Sciatic nerve (tissue), 2 donors: ENCODE measurements at regions of chr4 and their contacts with region 1.

Region 1: DNA sequence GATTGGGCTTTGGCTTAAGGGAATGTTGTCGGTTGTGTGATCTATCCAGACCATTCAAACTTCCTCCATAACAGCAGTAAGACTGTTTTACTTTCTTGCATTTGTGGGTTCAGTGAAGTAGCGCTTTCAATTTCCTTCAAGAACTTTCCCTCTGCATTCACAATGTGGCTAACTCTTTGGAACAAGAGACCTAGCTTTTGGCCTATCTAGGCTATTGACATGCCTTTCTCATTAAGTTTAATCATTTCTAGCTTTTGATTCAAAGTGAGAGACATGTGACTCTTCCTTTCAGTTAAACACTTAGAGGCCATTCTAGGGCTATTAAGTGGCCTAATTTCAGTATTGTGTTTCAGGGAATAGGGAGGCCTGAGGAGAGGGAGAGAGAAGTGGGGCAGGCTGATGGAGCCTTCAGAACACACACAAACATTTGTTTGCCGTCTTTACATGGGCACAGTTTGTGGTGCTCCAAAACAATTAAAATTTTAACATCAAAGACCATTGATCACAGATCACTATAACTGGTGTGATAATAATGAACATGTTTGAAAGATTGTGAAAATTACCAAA is 34.1 kb downstream of the ADH5 start:
- DNase-seq: no peak
- ATAC-seq: no peak

Region 2: GRCh38 chr4:98143001-98143899 is 911.3 kb before region 1 on chr4 and contains the start of gene STPG2:
- intact Hi-C with region 1: loop called (anchors 10 kb)
- DNase-seq: peak; percentile 94
- ATAC-seq: peak; percentile 100
- total RNA-seq, gene STPG2: 1.5 TPM

Region 3: DNA sequence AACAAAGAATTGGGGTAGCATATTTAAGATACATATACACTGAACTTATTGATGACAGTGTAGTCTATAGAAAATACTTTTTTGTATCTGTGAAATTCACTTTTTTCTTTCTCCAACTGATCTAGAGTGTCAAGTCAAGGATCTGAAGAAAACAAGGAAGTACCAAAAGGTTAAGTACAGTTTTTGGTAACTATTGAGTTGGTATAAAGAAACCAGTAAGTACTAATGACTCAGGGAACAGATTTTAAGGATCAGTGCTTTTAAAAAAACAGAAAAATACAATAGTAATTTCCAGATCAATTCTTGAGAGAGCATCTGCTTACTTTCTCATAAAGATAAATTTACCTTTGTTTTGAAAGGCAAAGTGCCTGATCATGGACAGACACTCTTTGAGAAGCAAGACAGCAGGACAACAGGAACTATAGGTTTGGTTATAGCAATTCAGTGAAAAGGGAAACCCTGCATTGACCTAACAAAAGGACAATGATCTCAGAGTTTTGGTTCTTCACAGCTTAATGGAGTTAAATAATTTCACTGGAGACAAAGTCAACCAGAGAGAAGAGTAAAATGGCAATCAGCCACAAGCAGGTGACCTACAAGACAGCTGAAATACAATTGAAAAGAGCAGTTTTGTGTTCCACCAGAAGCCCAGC is 485.9 kb after region 1 on chr4:
- intact Hi-C with region 1: no loop called
- DNase-seq: no peak
- ATAC-seq: no peak

Region 4: GRCh38 chr4:100721077-100721476 is 1666.6 kb after region 1 on chr4:
- intact Hi-C with region 1: no loop called
- DNase-seq: no peak
- ATAC-seq: no peak